ENCODE measurements at regions of chr11 and their contacts with region 1.

Region 1: DNA sequence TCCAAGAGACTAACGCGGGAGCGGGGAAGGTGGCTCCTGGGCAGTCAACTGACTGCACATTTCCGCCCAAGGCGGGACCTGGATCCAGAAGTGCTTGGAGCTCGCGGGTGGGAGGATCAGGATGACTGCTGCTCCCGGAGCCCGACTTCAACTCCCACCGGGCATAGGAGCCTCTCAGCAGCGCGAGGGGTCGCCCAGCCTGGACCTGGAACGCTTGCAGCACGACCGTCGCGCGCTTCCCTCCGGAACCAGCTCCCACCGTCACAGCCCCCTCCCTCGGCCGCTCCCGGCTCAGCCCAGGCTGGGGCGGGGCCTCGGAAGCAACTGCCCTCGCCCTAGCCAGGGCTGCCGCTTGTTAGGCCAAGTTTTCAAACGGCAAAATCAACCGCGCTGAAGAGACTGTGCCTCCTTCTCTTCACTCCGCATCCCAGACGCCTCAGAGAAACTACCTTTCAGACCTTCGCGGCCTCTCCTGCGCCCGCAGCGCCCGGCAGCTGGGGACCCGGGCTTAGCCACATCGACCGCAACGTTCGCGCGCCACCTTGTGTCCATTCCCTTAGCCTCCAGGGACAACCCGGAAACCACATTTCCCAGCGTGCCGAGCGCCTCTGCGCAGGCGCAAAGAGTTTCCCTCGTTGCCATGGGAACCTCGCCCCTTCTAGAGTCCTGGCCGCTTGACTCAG is 14.0 kb downstream of the SSH3 start:
- DNase-seq: peak; percentile 99
- ATAC-seq: peak; percentile 90
- H3K4me3 Mint-ChIP-seq: peak overlapping the region; percentile 90
- H3K27ac Mint-ChIP-seq: peak overlapping the region; percentile 98
- H3K4me1 Mint-ChIP-seq: peaks cover 27% of the 10 kb centered on the region
- H3K27me3 Mint-ChIP-seq: peaks cover 9% of the 10 kb centered on the region

Region 2: DNA sequence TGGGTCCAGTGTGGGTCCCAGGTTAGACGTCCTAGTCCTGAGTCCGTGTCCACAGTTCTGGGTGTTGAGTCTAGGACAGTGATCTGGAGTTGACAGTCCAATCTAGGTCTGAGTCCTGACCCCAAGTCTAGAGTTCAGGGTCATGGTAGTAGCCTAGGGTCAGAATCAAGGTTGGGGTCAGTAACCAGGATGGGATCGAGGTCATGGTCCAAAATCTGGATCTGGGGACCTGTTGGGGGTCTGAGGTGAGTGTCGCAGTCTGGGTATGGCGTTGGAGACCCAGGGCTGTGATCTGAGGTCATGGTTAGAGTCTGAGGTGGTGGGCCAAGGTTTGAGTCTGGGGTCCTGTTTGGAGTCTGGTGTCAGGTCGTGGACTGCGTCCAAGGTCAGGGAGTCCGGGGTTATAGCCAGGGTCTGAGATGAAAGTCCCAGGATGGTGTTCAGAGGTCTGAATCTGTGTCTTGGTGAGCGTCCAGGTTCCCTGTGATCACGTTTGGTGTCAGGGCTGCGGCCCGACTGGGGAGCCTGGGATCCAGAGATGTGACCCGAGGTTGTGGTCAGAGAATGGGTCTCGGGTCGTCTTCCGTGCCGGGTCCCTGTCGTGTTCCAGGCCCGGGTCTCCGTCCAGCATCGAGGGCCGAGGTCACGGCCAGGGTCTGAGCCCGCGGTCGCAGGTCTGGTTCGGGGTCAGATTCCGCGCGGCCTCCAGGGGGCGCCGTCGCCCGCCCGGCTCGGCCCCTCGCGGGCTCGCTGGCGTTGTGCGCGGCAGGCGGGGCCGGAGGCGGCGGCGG is 51.5 kb before region 1 on chr11:
- CTCF ChIA-PET with region 1: interaction called, 153 read pairs
- DNase-seq: peak; percentile 82
- ATAC-seq: peak; percentile 48
- H3K4me3 Mint-ChIP-seq: peak overlapping the region; percentile 62
- H3K27ac Mint-ChIP-seq: peak overlapping the region; percentile 79
- H3K4me1 Mint-ChIP-seq: peaks cover 68% of the 10 kb centered on the region
- H3K27me3 Mint-ChIP-seq: peaks cover 4% of the 10 kb centered on the region

Region 3: DNA sequence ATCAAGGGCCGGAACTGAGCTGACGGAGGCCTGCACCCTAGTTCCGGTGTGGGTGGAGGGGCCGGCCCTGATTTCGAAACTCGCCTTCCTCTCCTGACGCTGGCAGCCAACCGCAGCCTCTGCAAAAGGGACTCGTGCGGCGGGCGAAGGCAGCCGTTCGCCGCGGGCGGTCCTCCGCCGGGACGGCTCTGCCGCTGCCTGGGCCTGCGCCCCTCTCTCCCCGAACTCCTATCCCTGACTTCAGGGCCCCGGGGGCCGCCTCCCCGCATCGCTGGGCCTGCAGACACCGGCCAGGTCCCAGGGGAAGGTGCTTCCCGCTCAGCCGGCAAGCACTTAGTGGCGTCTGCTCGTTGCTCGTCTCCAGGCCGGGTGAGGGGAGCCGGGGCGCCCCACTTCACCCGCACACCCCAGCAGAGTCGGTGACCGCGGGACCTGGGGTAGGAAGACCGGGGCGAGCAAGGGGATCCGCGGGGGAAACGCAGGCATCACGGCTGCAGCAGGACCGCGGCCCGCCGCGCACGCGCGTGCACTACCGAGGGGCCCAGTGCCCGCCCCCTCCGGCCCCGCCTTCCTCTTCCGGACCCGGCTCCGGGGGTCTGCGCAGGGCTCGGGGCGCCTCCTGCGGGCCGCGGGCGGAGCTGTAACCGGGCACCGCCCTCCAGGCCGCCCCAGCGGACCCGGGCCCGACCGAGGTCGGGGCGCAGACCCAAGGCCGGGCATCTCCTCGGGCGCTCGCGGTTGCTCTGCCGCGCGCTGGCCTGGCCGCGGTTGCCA is 28.7 kb before region 1 on chr11:
- CTCF ChIA-PET with region 1: interaction called, 32 read pairs
- DNase-seq: peak; percentile 96
- ATAC-seq: peak; percentile 75
- H3K4me3 Mint-ChIP-seq: peak overlapping the region; percentile 63
- H3K27ac Mint-ChIP-seq: peak overlapping the region; percentile 96
- H3K4me1 Mint-ChIP-seq: peaks cover 69% of the 10 kb centered on the region
- H3K27me3 Mint-ChIP-seq: no peaks in the 10 kb centered on the region

Region 4: DNA sequence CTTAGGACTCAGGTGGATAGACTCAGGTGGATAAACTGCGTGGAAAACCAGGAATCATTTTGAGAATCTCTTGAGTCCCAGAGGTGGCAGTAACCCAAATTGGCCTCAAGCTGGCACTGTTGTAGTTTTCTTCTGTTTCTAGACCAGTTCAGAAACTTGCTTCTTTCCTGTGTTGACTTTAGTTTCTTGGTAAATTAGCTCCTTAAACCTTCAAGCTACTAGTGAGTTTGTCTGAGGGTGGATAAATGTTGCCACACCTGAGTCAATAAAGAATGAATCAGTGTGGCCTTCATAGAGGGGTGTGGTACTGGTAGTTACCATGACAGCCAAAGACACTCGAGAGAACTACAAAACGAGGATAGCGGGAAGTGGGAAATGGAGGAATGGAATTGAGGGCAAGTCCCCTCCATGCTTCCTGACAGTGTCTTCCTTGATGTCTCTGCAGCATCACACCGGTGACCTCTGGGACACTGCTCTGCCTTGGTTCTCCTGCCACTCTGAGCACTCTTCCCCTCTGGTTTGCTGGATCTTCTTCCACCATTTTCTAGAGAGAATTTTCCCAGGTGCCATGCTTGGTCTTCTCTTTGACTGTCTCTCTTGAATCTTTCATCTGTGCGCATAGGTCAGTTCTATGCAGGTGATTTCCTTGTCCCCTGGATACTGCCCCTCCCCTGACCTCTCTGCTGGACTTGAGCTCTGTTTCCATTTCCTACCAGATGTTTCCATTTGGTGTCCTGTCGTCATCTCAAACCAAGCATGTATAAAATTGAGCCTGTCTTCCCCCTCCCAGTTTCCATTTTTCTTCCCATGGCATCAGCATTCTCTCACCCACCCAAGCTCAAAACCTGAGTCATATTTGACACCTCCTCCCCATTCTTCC is 28.8 kb after region 1 on chr11:
- CTCF ChIA-PET with region 1: interaction called, 72 read pairs
- DNase-seq: no peak
- ATAC-seq: peak; percentile 70
- H3K4me3 Mint-ChIP-seq: no peak overlapping the region
- H3K27ac Mint-ChIP-seq: no peak overlapping the region
- H3K4me1 Mint-ChIP-seq: peaks cover 31% of the 10 kb centered on the region
- H3K27me3 Mint-ChIP-seq: no peaks in the 10 kb centered on the region

Region 5: GRCh38 chr11:67472882-67473281 is 155.5 kb after region 1 on chr11:
- CTCF ChIA-PET with region 1: no interaction called
- DNase-seq: no peak
- ATAC-seq: no peak
- H3K4me3 Mint-ChIP-seq: no peak overlapping the region
- H3K27ac Mint-ChIP-seq: no peak overlapping the region
- H3K4me1 Mint-ChIP-seq: peaks cover 9% of the 10 kb centered on the region
- H3K27me3 Mint-ChIP-seq: peaks cover 2% of the 10 kb centered on the region